A673 (cell line): ENCODE measurements at regions of chr5 and their contacts with region 1.

Region 1: DNA sequence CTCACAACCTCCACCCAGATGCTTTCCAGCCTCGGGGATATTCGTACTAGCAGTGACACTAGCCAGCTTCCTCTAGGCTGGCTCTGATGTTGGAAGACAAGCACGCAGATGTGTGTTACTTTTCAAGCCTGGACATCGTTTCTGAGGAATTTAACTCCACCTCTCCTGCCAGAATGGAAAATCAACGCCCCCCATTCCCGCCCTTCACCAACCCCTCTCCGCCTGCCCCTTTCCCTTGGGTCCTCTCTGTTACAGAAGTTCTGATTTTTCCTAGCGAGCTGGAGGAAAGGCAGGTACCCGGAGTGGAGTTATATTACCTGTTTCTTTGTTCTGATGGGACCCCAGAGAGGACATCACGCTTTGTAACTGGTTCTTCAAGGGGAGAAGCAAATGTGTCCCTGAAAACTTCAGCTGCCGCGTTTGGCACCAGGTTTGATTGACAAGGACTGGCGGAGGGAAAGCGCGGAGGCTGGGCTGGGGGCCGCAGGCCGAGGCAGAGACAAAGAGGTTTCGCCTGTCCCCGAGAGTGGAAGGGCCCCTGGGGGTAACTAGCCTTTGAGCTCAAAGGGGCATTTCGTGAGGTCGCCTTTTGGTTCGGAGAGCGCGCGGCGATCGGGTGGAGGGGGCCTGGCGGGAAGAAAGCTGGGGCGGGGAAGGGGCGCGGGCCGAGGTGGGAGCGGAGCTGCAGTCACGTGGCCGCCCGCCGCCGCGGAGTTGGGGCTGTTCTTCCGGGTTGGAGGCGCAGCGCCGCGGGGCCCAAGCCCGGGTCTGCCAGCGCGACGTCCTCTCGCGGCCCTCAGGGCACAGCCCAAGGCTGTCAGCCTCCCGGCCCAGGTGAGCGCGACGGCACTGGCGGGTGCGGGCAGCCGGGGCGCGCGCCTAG is at the start of gene NNT:
- DNase-seq: peak; percentile 76
- H3K4me3 ChIP-seq: peak within 1 kb of the TSS; percentile 57
- H3K27ac ChIP-seq: peak within 1 kb of the TSS; percentile 74
- H3K4me1 ChIP-seq: peaks cover 11% of the 10 kb centered on the region
- H3K27me3 ChIP-seq: no peaks in the 10 kb centered on the region
- CTCF ChIP-seq: no peak
- total RNA-seq, gene NNT: 65.4 and 71.6 TPM in 2 replicates

Region 2: GRCh38 chr5:43556857-43557542 is 45.7 kb before region 1 on chr5 and contains the start of gene PAIP1:
- CTCF ChIA-PET with region 1: no interaction called
- POLR2A ChIA-PET with region 1: no interaction called
- intact Hi-C with region 1: loop called (anchors 5 kb)
- DNase-seq: peak; percentile 88
- H3K4me3 ChIP-seq: peak within 1 kb of the TSS; percentile 92
- H3K27ac ChIP-seq: peak within 1 kb of the TSS; percentile 94
- H3K4me1 ChIP-seq: peaks cover 32% of the 10 kb centered on the region
- H3K27me3 ChIP-seq: no peaks in the 10 kb centered on the region
- CTCF ChIP-seq: peak; percentile 59
- total RNA-seq, gene PAIP1: 113 and 118 TPM in 2 replicates